ENCODE measurements at regions of chr6 and their contacts with region 1.

Region 1: DNA sequence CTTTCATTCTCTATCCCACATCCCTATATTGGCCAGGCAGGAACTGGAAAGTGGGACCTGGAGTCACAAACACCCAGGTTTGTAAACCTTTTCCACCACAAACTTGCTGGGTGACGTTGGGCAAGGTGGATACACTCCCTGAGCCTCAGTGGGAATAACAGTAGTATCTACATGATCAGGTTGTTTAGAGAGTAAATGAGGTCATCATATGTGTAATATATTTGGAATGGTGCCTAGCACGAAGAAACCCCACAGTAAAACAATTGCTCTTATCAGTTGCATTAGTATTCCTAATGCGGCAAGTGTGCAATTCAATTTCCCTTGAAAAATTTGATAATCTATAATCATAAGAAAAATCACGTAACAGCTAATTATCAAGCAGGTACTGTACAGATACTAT is 51.9 kb downstream of the HIVEP2 start:
- DNase-seq: no peak
- H3K4me3 ChIP-seq: no peak overlapping the region
- H3K27ac ChIP-seq: no peak overlapping the region
- H3K4me1 ChIP-seq: peaks cover 25% of the 10 kb centered on the region
- H3K27me3 ChIP-seq: no peaks in the 10 kb centered on the region
- CTCF ChIP-seq: no peak

Region 2: DNA sequence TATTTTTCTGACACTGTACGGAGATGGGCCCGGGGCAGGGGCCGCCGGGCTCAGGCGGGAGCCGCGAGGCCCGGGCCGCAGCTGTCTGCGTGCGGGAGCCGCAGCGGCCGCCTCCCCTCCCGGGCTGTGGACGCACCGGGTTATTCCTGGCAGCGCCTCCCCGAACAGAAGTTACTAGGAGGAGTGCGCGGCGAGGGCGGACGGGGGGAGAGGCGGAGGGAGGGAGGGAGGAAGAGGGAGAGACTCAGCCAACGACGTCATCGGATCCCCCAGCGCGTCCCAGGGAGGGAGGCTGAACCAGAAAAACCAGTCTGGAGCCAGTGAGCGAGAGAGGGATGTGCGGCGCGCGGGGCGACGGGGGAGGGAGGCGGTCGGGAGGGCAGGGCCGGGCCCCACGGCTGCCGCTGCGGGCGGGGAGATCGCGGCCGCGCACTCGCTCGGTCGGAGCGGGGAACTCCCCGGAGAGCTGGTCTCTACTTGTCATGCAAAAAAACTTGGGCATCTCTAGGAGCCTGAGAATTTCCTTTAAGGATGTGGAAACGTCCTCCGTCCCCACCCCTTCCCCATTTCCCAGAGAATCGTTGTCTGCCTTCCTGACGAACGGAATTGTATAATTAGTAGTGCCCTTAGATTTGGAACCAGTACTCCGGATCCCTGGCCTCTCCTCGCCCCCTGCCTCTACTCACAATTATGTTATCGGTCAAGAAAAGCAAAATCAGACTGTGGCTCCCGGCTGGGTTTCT is 53.3 kb after region 1 on chr6:
- intact Hi-C with region 1: loop called (anchors 10 kb)
- DNase-seq: peak; percentile 98
- H3K4me3 ChIP-seq: peak overlapping the region; percentile 93
- H3K27ac ChIP-seq: peak overlapping the region; percentile 98
- H3K4me1 ChIP-seq: peaks cover 55% of the 10 kb centered on the region
- H3K27me3 ChIP-seq: no peaks in the 10 kb centered on the region
- CTCF ChIP-seq: no peak